ENCODE measurements at regions of chr2 and their contacts with region 1.

Region 1: DNA sequence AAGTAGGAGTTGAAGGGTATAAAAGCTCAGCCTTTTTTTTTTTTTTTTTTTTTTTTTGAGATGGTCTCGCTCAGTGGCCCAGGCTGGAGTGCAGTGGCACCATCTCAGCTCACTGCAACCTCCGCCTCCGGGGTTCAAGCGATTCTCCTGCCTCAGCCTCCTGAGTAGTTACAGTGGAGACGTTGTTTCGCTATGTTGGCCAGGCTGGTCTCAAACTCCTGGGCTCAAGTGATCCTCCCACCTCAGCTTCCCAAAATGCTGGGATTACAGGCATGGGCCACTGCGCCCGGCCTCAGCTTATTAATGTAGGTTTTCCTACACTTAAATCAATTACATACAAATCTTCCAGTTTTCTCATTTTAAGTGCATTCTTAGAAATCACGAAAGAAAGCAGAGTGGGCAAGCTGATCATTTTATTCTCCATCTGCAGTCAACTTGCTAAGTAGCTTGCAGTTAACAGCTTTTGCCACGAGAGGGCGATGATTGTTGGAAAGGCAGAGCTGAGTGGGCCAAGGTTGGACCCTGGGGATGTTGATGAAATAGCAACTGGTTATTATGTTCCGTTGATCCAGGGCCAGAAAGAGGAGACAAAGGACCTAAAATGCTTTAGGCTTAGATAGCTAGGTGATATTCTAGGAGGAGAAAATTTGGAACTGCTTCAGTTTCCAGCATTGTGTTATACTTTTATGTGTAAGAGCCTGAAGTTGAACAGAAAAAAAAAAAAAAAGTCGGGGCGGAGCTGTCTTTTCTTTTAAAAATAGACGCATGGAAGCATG is 234.4 kb upstream of the EPAS1 start:
- DNase-seq: peak; percentile 56 to 65 (median 65)
- H3K4me3 ChIP-seq: no peak overlapping the region
- H3K4me3 Mint-ChIP-seq: peak overlapping the region in 1 of 2 donors; percentile 39
- H3K27ac ChIP-seq: no peak overlapping the region
- H3K27ac Mint-ChIP-seq: no peak overlapping the region
- H3K4me1 ChIP-seq: no peaks in the 10 kb centered on the region
- H3K4me1 Mint-ChIP-seq: peaks cover 3% of the 10 kb centered on the region
- H3K27me3 ChIP-seq: no peaks in the 10 kb centered on the region
- H3K27me3 Mint-ChIP-seq: peaks cover 0 to 1% (median 0%) of the 10 kb centered on the region in 3 donors
- CTCF ChIP-seq: peak; percentile 89

Region 2: GRCh38 chr2:46451131-46451711 is 388.4 kb after region 1 on chr2:
- intact Hi-C with region 1: loop called in 1 of 2 experiments (anchors 10 kb)
- DNase-seq: no peak
- H3K4me3 ChIP-seq: no peak overlapping the region
- H3K4me3 Mint-ChIP-seq: no peak overlapping the region
- H3K27ac ChIP-seq: no peak overlapping the region
- H3K27ac Mint-ChIP-seq: no peak overlapping the region
- H3K4me1 ChIP-seq: no peaks in the 10 kb centered on the region
- H3K4me1 Mint-ChIP-seq: no peaks in the 10 kb centered on the region
- H3K27me3 ChIP-seq: no peaks in the 10 kb centered on the region
- H3K27me3 Mint-ChIP-seq: peaks cover 0 to 3% (median 2%) of the 10 kb centered on the region in 3 donors
- CTCF ChIP-seq: no peak